ENCODE measurements at regions of chr5 and their contacts with region 1.

Region 1: GRCh38 chr5:116953251-116953930 is 378.8 kb upstream of the SEMA6A start:
- DNase-seq: peak in 4 of 10 donors; percentile 5 to 58 (median 49)
- H3K4me3 ChIP-seq: peak overlapping the region in 44 of 59 donors; percentile 4 to 57 (median 27)
- H3K27ac ChIP-seq: peak overlapping the region in 58 of 59 donors; percentile 10 to 93 (median 80)
- H3K27me3 ChIP-seq: no peaks in the 10 kb centered on the region
- CTCF ChIP-seq: no peak

Region 2: DNA sequence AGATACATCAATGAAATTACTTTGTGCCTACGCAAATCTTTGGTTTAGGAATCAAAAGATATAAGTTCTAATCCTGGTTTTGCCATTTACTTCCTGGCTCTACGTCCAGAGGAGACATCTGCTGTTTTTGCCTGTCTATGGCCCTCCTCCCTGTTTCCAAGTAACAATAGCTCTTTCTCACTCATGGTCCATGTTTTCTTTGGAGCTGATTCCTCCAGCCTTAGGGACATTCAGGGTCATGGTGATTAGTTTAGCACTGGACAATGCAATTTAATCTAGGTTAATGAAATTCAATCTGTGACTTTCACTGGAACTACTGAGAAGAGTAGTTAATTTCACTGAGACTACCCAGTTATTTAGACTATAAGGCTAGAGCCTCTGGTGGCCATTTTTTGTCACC is 549.4 kb before region 1 on chr5:
- intact Hi-C with region 1: loop called in 1 of 2 experiments (anchors 10 kb)
- DNase-seq: no peak
- H3K4me3 ChIP-seq: no peak overlapping the region
- H3K27ac ChIP-seq: peak overlapping the region in 55 of 59 donors; percentile 0 to 85 (median 69)
- H3K27me3 ChIP-seq: no peaks in the 10 kb centered on the region
- CTCF ChIP-seq: peak in 25 of 56 donors; percentile 10 to 42 (median 24)

Region 3: GRCh38 chr5:118033686-118034338 is 1080.4 kb after region 1 on chr5:
- intact Hi-C with region 1: loop called in 1 of 2 experiments (anchors 10 kb)
- DNase-seq: peak in 1 of 10 donors; percentile 39
- H3K4me3 ChIP-seq: no peak overlapping the region
- H3K27ac ChIP-seq: no peak overlapping the region
- H3K27me3 ChIP-seq: no peaks in the 10 kb centered on the region
- CTCF ChIP-seq: no peak

Measured in dorsolateral prefrontal cortex (tissue), 120 donors.